Motor neuron (in vitro differentiated cells): ENCODE measurements at regions of chrX and their contacts with region 1.

Region 1: DNA sequence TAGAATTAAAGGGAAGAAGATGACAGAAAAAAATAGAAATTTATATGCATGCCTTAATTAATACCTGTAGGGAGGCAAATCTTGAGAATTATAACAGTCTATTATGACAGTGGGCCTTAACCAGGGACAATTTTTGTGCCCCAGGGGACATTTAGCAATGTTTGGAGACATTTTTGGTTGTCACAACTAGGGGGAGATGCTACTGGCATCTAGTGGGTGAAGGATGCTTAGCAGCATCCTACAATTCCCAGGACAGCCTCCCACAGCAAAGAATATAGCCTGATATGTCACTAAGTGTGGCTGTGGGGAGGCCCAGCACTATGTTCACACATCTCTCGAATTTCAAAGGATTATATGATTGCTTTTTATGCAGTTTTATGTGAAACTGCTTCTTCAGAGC is 10.5 kb downstream of the GPR82 start:
- ATAC-seq: peak in 4 of 8 experiments; percentile 34 to 68 (median 50)
- H3K4me3 ChIP-seq: no peak overlapping the region
- H3K27ac ChIP-seq: no peak overlapping the region
- H3K4me1 ChIP-seq: no peaks in the 10 kb centered on the region

Region 2: DNA sequence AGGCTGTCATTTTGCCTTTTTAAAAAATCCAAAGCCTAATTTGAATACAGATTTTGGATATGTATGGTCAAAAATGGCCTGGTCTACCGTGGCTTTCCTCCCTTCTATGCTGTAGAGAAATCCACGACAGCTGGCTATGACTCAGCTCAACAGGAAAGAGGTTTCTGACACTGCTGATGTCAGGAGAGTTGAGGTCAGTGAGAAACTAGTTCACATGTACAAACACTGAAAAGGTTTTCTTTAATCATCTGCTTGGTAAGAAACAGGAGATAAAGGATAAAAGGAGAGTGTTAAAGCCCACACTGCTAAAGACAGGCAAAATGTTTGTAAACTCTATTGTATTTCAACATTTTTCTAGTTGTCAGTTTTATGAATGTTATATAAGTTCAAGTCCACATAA is 173.5 kb before region 1 on chrX:
- in situ Hi-C with region 1: loop called in 1 of 9 experiments (anchors 25 kb)
- ATAC-seq: peak in 7 of 8 experiments; percentile 55 to 89 (median 83)
- H3K4me3 ChIP-seq: no peak overlapping the region
- H3K27ac ChIP-seq: no peak overlapping the region
- H3K4me1 ChIP-seq: no peaks in the 10 kb centered on the region

Region 3: DNA sequence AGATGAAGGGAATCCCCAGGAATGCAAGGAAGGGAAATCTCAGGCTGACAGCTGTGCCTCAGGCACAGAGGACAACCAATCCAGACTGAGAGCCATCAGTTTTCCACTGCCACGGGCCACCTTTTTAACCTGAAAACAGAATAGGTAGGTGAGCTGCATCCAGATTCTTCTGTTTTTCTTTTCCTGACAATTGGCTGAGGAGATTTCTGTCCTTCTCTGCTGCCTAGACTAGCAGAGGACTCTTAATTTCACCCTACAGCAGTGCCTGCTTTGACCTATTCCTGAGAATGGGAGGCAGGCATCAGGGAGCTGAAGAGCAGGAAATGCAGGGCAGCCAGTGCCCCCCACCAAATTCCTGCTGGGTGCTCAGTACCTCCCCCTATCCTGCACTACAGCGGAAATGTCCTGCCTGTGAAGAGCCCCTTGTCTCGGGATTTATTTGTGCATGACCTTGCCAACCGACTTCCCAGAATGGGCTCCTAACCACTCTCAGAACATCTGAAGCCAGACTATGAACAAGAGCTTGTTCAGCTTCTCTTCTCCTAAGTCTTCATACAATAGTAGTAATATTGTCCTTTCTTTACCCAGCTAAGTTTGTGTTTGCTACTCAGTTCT is 123.7 kb after region 1 on chrX:
- in situ Hi-C with region 1: no loop called
- ATAC-seq: no peak
- H3K4me3 ChIP-seq: no peak overlapping the region
- H3K27ac ChIP-seq: no peak overlapping the region
- H3K4me1 ChIP-seq: no peaks in the 10 kb centered on the region